A673 (cell line): ENCODE measurements at regions of chr1 and their contacts with region 1.

Region 1: GRCh38 chr1:221637641-221638041 is 104.2 kb downstream of the DUSP10 start:
- DNase-seq: no peak
- H3K4me3 ChIP-seq: no peak overlapping the region
- H3K27ac ChIP-seq: no peak overlapping the region
- H3K4me1 ChIP-seq: no peaks in the 10 kb centered on the region
- H3K27me3 ChIP-seq: no peaks in the 10 kb centered on the region
- CTCF ChIP-seq: no peak

Region 2: DNA sequence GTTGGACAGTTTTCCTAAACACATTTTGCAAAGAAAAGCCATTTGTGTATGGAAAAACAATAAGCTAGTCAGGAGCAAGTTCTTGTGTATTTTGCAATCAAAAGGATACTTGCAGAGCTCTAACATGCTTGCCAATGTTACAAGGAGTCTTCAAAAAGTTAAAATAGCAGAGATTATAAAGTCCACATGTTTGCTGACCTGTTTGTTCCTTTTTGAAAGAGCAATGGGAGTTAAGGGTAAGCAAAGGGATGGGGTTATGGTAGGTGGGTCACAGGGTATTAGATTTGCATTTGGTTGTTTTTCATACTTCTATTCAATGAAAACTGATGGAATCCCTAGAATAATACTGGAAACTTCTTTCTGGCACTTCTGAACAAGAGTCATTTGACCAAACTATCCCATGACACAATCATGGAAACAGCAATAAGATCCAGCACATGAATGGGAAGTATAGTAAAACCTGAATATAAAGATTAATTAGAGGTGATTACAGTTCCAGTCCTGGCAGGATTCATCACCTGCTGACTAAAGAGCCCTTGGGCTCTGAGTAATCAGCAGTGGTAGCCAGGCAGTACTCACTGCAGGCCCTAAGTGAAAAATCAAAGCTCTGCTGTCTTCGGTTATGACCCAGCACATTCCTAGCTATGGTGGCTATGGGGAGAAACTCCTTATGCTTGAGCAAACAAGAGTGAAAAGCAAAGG is 1997.6 kb before region 1 on chr1:
- CTCF ChIA-PET with region 1: no interaction called
- POLR2A ChIA-PET with region 1: no interaction called
- intact Hi-C with region 1: no loop called
- DNase-seq: no peak
- H3K4me3 ChIP-seq: no peak overlapping the region
- H3K27ac ChIP-seq: no peak overlapping the region
- H3K4me1 ChIP-seq: no peaks in the 10 kb centered on the region
- H3K27me3 ChIP-seq: peaks cover 14% of the 10 kb centered on the region
- CTCF ChIP-seq: no peak

Region 3: GRCh38 chr1:221394011-221394544 is 243.6 kb before region 1 on chr1:
- CTCF ChIA-PET with region 1: no interaction called
- POLR2A ChIA-PET with region 1: no interaction called
- intact Hi-C with region 1: no loop called
- DNase-seq: no peak
- H3K4me3 ChIP-seq: no peak overlapping the region
- H3K27ac ChIP-seq: no peak overlapping the region
- H3K4me1 ChIP-seq: no peaks in the 10 kb centered on the region
- H3K27me3 ChIP-seq: no peaks in the 10 kb centered on the region
- CTCF ChIP-seq: no peak

Region 4: DNA sequence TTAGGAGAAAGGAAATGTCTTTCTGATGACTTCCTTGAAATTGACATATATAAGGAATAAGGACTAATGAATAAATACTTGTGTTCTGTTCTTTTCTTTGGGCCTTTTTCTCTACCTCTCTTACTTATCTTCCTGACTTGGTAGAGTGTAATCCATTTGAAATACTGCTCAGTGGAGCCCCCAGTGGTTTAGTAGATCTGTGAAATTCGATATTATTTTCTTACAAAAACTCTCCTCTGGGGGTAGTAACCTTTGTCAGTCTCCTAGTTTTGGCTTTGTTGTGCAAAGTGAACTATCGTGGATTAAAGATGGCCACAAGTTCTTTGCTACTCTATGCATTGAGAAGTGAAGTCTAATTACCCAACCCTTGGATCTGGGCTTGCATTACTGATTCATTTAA is 55.4 kb after region 1 on chr1:
- CTCF ChIA-PET with region 1: no interaction called
- POLR2A ChIA-PET with region 1: no interaction called
- intact Hi-C with region 1: loop called (anchors 10 kb)
- DNase-seq: no peak
- H3K4me3 ChIP-seq: no peak overlapping the region
- H3K27ac ChIP-seq: no peak overlapping the region
- H3K4me1 ChIP-seq: no peaks in the 10 kb centered on the region
- H3K27me3 ChIP-seq: no peaks in the 10 kb centered on the region
- CTCF ChIP-seq: no peak